Activated T-helper 1 cell treated with anti-CD3 and anti-CD28 coated beads, Interleukin-12 subunit alpha, Interleukin-12 subunit beta, Interleukin-2, Interleukin-4 antibody, amounts not matched to agents 30 ng/mL and 10 ng/mL and 1 ng/mL, durations not matched to agents 14 hours and 24 hours and 36 hours (primary cell): ENCODE measurements at regions of chr7 and their contacts with region 1.

Region 1: DNA sequence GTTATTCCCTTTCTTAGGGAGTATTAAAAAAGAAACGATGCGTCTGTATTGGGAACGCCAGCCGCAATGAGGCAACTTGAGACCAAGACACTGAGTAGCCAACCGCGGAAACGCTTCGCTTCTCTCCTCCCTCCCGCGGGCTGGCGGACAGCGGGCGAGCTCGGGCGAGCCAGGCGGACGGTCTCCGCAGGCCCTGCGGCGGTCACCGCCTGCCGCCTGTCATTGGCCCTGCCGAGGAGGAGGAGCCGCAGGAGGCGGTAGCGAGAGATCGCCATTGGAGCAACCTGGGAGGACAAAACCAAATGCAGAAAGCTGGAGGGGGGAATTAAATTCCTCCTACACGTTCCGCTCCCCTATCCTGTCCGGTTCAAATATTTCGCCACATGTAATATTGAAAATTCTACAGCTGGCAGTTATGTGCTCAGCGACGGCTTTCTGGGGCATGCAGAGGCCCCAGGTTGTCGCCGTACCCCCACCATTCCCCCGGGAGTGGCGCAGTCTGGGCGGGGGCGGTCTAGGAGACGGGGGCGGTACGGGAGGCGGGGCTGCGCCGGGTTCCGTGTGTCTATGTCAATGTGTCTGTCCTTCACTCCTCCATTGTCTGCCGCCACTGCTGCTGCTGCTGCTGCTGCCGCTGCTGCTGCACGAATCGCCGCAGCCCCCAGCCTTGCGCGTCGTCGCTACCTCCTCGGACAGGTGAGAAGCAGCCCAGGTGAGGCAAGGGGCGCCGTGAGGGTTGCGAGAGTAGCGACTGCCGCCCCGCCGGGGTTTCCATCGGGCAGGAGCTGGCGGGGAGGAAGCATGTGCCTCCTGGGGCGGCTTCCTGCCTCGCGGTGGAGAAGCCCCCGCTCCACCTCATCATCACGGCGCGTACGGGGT is at the starts of genes ANKMY2 and BZW2:
- DNase-seq: peak; percentile 93
- H3K4me3 Mint-ChIP-seq: peak within 1 kb of the TSS; percentile 98
- H3K27ac Mint-ChIP-seq: peak within 1 kb of the TSS; percentile 100
- H3K4me1 Mint-ChIP-seq: peaks cover 60% of the 10 kb centered on the region
- H3K27me3 Mint-ChIP-seq: no peaks in the 10 kb centered on the region
- total RNA-seq, gene ANKMY2: 6.9 and 8.4 TPM in 2 replicates
- total RNA-seq, gene BZW2: 94.3 and 101 TPM in 2 replicates

Region 2: DNA sequence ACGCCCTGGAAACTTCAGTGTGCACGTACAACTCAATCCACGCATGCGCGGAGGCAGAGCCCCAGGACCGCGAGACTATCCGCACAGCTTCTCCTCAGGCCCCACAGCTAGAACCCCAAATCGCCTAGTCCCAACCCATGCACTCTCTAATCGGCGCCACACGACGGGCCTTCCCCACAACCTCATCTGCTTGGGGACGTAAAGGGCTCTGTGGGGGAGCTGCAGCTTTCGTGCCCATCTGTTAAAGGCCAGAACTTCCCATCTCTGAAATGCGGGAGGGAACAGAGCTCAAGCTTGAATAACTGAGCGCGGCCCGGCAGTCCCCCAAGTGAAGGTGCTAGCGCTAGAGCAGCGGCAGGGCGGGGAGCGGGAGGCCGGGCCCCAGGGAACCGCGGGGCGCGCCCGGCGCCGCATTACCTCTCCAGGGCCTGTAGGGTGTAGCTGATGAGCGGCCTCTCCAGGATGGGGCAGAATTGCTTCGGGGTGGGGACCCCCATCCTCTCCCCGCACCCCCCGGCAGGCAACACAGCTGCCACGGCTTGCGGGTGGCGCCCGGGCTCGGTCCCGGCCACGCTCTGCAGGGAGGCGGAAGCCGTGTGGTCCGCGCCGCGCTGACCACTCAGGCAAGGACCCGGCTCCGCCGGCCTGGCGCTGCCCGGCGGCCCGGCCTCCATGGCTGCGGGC is 225.0 kb before region 1 on chr7:
- intact Hi-C with region 1: loop called (anchors 1 kb)
- DNase-seq: peak; percentile 80
- H3K4me3 Mint-ChIP-seq: peak overlapping the region; percentile 87
- H3K27ac Mint-ChIP-seq: peak overlapping the region; percentile 82
- H3K4me1 Mint-ChIP-seq: peaks cover 22% of the 10 kb centered on the region
- H3K27me3 Mint-ChIP-seq: no peaks in the 10 kb centered on the region

Region 3: DNA sequence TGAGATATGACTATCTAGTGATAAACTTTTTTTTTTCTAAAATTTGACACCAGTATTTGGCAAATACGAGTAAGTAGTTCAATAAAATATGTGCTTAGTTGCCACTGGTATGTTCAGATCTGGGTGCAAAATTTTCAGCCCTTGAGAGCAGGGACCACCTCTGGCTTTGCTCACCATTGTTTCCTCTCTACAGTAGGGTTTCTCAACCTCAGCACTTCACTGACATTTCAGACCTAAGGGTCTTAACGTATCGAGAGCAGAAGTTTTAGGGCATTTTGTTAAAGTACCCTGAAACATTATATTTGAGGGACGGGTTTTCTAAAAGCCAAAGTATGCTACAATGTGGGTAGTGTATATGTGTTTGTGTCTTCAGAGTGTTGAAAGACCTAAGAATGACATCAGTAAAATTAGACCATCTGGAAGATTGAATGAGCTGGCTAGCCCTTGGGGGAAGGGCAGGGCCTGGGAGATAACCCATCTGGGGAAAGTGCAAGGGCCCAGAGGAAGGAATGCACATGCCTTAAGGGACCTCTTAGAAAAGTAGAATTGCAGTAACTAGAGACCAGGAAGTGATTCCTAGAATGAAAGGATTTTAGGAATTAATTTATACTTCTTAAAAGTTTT is 11.9 kb after region 1 on chr7:
- intact Hi-C with region 1: loop called (anchors 1 kb)
- DNase-seq: no peak
- H3K4me3 Mint-ChIP-seq: no peak overlapping the region
- H3K27ac Mint-ChIP-seq: no peak overlapping the region
- H3K4me1 Mint-ChIP-seq: peaks cover 27% of the 10 kb centered on the region
- H3K27me3 Mint-ChIP-seq: no peaks in the 10 kb centered on the region

Region 4: DNA sequence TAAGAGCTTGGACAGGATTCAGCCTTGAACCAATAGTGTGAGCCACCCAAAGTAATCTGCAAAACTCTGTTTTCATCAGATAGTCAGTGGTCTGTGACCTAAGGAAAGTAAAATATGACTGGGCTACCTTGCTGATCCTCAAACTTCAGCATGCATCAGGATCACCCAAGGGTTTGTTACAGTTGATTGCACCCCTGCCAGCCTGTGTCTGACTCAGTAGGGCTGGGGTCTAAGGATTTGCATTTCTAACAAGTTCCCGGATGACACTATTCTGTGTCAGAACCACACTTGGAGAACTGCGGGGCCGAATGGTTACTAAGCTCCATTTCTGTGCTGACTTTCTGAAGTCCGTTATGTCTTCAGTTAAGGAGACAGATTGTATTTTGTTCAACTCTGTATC is 67.1 kb after region 1 on chr7:
- intact Hi-C with region 1: loop called (anchors 2 kb)
- DNase-seq: no peak
- H3K4me3 Mint-ChIP-seq: no peak overlapping the region
- H3K27ac Mint-ChIP-seq: no peak overlapping the region
- H3K4me1 Mint-ChIP-seq: peaks cover 22% of the 10 kb centered on the region
- H3K27me3 Mint-ChIP-seq: no peaks in the 10 kb centered on the region

Region 5: GRCh38 chr7:17144322-17144721 is 498.5 kb after region 1 on chr7:
- intact Hi-C with region 1: loop called (anchors 10 kb)
- DNase-seq: peak; percentile 49
- H3K4me3 Mint-ChIP-seq: peak overlapping the region; percentile 1
- H3K27ac Mint-ChIP-seq: peak overlapping the region; percentile 25
- H3K4me1 Mint-ChIP-seq: peaks cover 46% of the 10 kb centered on the region
- H3K27me3 Mint-ChIP-seq: no peaks in the 10 kb centered on the region